Right ventricle myocardium superior (tissue), 1 donor: ENCODE measurements at regions of chr7 and their contacts with region 1.

Region 1: GRCh38 chr7:129218514-129219062 is 6.2 kb upstream of the AHCYL2 start:
- DNase-seq: peak; percentile 85
- ATAC-seq: peak; percentile 94

Region 2: DNA sequence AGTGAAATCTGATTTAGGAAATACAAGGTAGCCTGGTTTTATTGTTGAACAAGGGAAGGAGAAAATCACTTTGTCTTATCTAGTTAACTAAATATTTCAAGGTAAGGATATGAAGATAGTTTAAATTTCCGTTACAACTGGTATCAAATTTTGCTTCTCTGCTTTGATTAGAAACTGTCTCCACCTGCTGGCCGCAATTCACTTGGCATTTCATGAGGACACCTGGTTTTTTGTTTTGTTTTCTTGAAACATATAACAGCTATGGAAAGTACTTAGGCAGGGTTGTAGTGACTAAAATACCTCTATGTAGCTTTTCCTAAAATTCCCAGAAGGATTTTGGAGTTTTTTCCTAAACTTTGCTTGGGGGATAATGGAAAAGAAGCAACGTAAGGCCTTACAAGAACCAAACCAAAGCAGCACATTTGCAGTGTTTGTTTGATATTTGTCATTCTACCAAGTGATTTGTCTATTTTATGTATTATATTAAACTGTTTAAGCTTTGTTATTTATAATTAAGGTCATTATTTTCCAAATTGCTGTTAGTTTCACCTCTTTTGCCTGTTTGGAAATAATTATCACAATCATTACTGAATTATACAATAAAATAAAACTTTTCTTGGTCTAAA is 79.8 kb after region 1 on chr7:
- intact Hi-C with region 1: loop called (anchors 5 kb)
- DNase-seq: peak; percentile 50
- ATAC-seq: no peak